ENCODE measurements at regions of chr3 and their contacts with region 1.

Region 1: GRCh38 chr3:52056968-52057805 is 816 bp upstream of the DUSP7 start:
- DNase-seq: peak; percentile 100
- H3K4me3 Mint-ChIP-seq: peak overlapping the region; percentile 78
- H3K27ac Mint-ChIP-seq: peak overlapping the region; percentile 92
- H3K4me1 Mint-ChIP-seq: peaks cover 28% of the 10 kb centered on the region
- H3K27me3 Mint-ChIP-seq: no peaks in the 10 kb centered on the region

Region 2: DNA sequence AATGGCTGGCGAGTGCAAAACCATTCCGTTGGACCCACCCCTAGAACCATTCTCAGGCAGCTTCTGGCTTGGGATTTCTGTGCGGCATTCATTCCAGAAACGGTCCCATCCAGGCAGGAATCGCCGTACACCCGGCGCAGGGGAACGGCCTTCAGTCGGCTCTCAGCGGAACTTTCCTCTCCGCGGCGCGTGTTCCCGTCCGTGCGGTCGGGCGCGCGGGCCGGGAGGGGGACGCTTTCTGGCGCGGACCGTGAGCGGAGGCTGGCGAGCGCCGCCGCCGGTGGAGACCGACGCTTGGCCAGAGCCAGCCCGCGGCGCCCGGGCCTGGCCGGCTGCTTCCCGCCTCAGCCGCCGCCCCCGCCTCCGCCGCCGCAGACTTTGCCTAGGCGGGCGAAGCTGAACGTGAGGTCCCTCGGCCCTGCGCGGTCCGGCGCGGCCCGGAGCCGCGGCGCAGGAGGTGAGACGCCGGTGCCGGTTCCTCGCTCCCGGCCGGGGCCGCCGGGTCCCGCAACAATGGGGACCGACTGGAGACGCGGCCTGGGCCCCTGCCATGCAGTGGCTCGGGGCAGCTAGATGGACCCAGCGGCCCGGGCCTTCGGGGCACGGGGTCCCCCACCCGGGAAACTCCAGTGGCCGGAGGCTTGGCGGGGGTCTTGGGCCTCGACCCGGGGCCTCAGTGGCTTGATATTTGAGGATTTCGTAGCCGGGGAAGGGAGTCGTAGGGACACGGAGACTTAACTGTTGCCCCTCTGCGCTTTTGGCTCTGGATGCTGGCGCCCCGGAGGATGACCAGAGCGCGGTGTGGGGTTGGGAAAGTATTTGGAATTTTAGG is 518.5 kb before region 1 on chr3 and contains the start of gene RAD54L2:
- CTCF ChIA-PET with region 1: no interaction called
- POLR2A ChIA-PET with region 1: no interaction called
- intact Hi-C with region 1: no loop called
- DNase-seq: peak; percentile 83
- H3K4me3 Mint-ChIP-seq: peak within 1 kb of the TSS; percentile 88
- H3K27ac Mint-ChIP-seq: peak within 1 kb of the TSS; percentile 87
- H3K4me1 Mint-ChIP-seq: peaks cover 28% of the 10 kb centered on the region
- H3K27me3 Mint-ChIP-seq: no peaks in the 10 kb centered on the region
- total RNA-seq, gene RAD54L2: 27.6 to 30.0 TPM

Region 3: DNA sequence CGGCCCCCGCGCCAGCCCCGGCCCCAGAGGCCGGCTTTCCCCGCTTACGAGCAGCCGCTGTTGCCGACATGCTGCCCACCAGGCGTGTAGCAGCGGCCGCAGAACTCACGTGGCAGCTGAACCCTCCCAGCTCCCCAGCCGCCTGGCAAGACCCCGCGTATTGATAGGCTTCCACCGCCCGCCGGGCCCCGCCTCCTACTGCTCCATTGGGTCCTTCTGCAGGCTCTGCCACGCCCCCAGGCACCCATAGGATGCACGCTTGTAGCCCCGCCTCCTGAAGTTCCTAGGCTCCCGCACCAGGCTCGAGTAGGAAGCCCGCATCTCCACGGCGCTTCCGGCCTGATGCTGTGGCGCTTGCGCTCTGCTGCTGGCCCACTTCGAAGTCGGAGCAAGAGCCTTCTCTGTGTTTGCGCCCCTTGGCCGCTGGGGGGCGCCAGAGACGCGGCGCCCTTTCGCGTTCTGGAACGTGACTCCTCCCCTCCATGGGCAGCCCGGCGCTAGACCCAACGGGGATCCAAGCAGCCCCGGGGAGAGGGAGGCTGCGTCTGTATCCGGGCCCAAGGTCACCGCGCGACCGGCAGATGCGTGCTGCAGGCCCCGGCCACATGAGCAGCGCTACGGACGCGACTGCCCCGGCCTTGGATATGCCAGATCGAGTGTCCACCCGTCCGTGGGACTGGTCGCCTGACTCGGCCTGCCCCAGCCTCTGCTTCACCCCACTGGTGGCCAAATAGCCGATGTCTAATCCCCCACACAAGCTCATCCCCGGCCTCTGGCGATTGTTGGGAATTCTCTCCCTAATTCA is 115.2 kb before region 1 on chr3 and contains the starts of genes PARP3 and RRP9:
- CTCF ChIA-PET with region 1: interaction called, 10 read pairs
- POLR2A ChIA-PET with region 1: interaction called, 3 read pairs
- intact Hi-C with region 1: loop called (anchors 1 kb)
- DNase-seq: peak; percentile 100
- H3K4me3 Mint-ChIP-seq: peak within 1 kb of the TSS; percentile 87
- H3K27ac Mint-ChIP-seq: peak within 1 kb of the TSS; percentile 83
- H3K4me1 Mint-ChIP-seq: peaks cover 29% of the 10 kb centered on the region
- H3K27me3 Mint-ChIP-seq: no peaks in the 10 kb centered on the region
- total RNA-seq, gene PARP3: 12.1 to 13.4 TPM
- total RNA-seq, gene RRP9: 32.3 to 35.4 TPM

Region 4: GRCh38 chr3:51982782-51983577 is 74.2 kb before region 1 on chr3 and contains the start of gene ACY1:
- CTCF ChIA-PET with region 1: interaction called, 7 read pairs
- POLR2A ChIA-PET with region 1: no interaction called
- intact Hi-C with region 1: loop called (anchors 5 kb)
- DNase-seq: peak; percentile 85
- H3K4me3 Mint-ChIP-seq: peak within 1 kb of the TSS; percentile 88
- H3K27ac Mint-ChIP-seq: peak within 1 kb of the TSS; percentile 88
- H3K4me1 Mint-ChIP-seq: peaks cover 28% of the 10 kb centered on the region
- H3K27me3 Mint-ChIP-seq: no peaks in the 10 kb centered on the region
- total RNA-seq, gene ACY1: 53.1 to 59.2 TPM

Region 5: DNA sequence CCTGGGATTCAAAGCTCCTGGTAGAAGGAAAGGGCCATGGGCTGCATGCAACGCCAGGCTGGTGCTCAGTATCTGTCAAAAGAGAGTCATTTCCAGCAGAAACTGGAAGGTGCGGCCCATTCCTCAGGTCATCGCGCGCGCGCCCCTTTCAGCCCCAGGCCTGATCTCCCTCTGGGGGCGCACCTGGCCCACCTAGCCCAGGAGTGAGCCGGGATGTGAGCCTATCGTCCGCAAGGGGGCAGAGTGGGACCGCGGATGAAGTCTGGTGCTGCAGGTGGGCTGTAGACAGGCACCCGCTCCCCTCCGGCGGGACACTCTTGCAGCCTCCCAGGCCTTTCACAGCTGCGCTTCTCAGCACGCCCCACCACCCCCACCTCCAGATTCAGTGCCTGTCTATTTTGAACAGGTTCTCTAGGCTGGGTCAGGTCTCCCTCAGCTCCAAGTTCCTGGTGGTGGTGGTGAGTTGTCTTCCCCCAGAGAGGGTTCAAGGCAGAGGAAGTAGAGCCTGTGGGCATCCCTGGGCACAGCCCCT is 55.7 kb before region 1 on chr3:
- CTCF ChIA-PET with region 1: interaction called, 50 read pairs
- POLR2A ChIA-PET with region 1: no interaction called
- intact Hi-C with region 1: loop called (anchors 1 kb)
- DNase-seq: peak; percentile 90
- H3K4me3 Mint-ChIP-seq: no peak overlapping the region
- H3K27ac Mint-ChIP-seq: no peak overlapping the region
- H3K4me1 Mint-ChIP-seq: peaks cover 14% of the 10 kb centered on the region
- H3K27me3 Mint-ChIP-seq: no peaks in the 10 kb centered on the region

Region 6: GRCh38 chr3:52093756-52094545 is 36.8 kb after region 1 on chr3:
- CTCF ChIA-PET with region 1: no interaction called
- POLR2A ChIA-PET with region 1: no interaction called
- intact Hi-C with region 1: no loop called
- DNase-seq: no peak
- H3K4me3 Mint-ChIP-seq: no peak overlapping the region
- H3K27ac Mint-ChIP-seq: no peak overlapping the region
- H3K4me1 Mint-ChIP-seq: no peaks in the 10 kb centered on the region
- H3K27me3 Mint-ChIP-seq: no peaks in the 10 kb centered on the region

Region 7: GRCh38 chr3:52144034-52144795 is 87.0 kb after region 1 on chr3:
- CTCF ChIA-PET with region 1: interaction called, 17 read pairs
- POLR2A ChIA-PET with region 1: no interaction called
- intact Hi-C with region 1: loop called (anchors 2 kb)
- DNase-seq: peak; percentile 87
- H3K4me3 Mint-ChIP-seq: no peak overlapping the region
- H3K27ac Mint-ChIP-seq: no peak overlapping the region
- H3K4me1 Mint-ChIP-seq: peaks cover 6% of the 10 kb centered on the region
- H3K27me3 Mint-ChIP-seq: no peaks in the 10 kb centered on the region

Region 8: DNA sequence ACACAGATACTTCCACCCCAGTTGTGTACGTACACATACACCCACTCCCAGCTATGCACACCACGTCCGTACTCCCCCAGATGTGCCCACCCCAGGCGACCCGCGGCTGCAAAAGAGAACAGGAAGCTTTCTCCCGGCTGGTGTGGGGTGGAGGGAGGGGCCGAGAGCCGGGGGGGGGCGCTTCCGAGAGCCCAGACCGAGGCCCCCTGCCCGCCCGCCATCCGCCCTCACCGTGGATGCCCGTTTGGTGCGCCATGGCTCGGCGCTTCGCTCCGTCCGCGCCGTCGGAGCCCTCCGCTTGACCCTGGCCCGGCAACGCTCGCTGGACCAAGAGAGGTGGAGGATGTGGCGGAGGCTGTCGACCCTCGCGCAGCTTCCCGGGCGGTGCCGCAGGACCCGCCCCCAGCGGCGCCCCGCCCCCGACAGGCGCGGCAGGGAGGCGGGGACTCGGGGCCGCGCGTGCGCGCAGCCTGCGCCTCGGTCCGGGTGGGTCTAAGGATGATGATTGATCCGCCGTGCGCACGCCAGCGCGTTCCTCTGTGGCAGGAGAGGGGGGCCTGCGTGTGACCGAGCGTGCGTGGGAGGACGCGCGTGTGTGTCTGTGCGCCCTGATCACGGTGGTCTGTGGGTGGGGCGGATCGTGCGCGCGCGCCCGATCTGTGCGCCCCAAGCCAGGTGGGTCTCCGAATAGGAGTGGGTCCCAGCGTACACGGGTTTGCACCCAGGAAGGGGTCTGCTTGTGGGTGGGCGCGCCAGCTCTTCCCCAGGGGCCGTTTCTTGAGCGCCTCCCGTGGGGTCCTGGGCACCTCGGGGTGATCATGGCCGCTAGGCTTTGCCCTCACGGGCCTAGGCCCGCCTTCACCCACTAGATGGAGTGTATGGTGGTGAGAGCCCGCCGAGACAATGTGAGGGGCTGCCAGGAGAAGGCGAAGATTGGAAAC is 181.8 kb after region 1 on chr3 and contains the start of gene TWF2:
- CTCF ChIA-PET with region 1: no interaction called
- POLR2A ChIA-PET with region 1: no interaction called
- intact Hi-C with region 1: loop called (anchors 1 kb)
- DNase-seq: peak; percentile 90
- H3K4me3 Mint-ChIP-seq: peak within 1 kb of the TSS; percentile 99
- H3K27ac Mint-ChIP-seq: peak within 1 kb of the TSS; percentile 97
- H3K4me1 Mint-ChIP-seq: peaks cover 70% of the 10 kb centered on the region
- H3K27me3 Mint-ChIP-seq: no peaks in the 10 kb centered on the region
- total RNA-seq, gene TWF2: 114 to 118 TPM

Region 9: GRCh38 chr3:52536369-52537164 is 479.4 kb after region 1 on chr3 and contains the start of gene UQCC5:
- CTCF ChIA-PET with region 1: no interaction called
- POLR2A ChIA-PET with region 1: no interaction called
- intact Hi-C with region 1: loop called (anchors 10 kb)
- DNase-seq: peak; percentile 99
- H3K4me3 Mint-ChIP-seq: peak within 1 kb of the TSS; percentile 92
- H3K27ac Mint-ChIP-seq: peak within 1 kb of the TSS; percentile 92
- H3K4me1 Mint-ChIP-seq: peaks cover 41% of the 10 kb centered on the region
- H3K27me3 Mint-ChIP-seq: no peaks in the 10 kb centered on the region
- total RNA-seq, gene UQCC5: 12.9 to 13.3 TPM